Activated CD4-positive, alpha-beta T cell treated with anti-CD3 and anti-CD28 coated beads for 36 hours (primary cell): ENCODE measurements at regions of chr11 and their contacts with region 1.

Region 1: GRCh38 chr11:46352063-46352841 is 5.0 kb downstream of the DGKZ start:
- DNase-seq: peak; percentile 88
- ATAC-seq: peak; percentile 39
- H3K4me3 Mint-ChIP-seq: peak overlapping the region; percentile 76
- H3K27ac Mint-ChIP-seq: peak overlapping the region; percentile 94
- H3K4me1 Mint-ChIP-seq: peaks cover 82% of the 10 kb centered on the region
- H3K27me3 Mint-ChIP-seq: no peaks in the 10 kb centered on the region

Region 2: GRCh38 chr11:45354976-45355705 is 997.1 kb before region 1 on chr11:
- CTCF ChIA-PET with region 1: no interaction called
- POLR2A ChIA-PET with region 1: no interaction called
- intact Hi-C with region 1: no loop called
- DNase-seq: peak; percentile 93
- ATAC-seq: peak; percentile 97
- H3K4me3 Mint-ChIP-seq: peak overlapping the region; percentile 75
- H3K27ac Mint-ChIP-seq: peak overlapping the region; percentile 72
- H3K4me1 Mint-ChIP-seq: peaks cover 21% of the 10 kb centered on the region
- H3K27me3 Mint-ChIP-seq: peaks cover 2% of the 10 kb centered on the region

Region 3: DNA sequence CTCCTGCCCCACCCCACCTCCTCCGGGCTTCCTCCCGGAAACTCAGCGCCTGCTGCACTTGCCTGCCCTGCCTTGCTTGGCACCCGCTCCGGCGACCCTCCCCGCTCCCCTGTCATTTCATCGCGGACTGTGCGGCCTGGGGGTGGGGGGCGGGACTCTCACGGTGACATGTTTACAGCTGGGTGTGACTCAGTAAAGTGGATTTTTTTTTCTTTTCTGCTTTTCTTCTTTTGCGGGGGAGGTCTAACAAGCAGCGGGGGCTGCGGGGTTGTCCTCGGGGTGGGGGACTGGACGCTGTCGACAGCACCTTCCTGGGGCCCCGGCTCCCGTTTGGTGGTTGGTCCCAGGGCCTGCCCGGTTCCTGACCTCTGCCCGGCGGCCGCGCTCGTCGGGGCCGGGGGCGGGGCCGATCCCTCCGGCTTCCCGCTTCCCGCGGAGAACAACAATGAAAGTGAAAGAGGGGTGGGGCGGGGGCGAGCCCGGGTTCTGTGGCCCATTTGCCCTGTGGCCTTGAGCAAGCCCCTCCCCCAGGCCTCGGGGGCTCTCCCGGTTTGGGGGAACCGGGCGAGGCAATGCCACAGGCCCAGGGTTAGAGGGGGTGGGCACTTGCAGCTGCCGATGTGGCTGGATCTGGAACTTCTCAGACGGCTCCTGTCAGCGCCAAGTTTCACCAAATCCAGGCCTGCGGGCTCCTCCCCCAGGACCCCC is 28.2 kb after region 1 on chr11:
- CTCF ChIA-PET with region 1: interaction called, 11 read pairs
- POLR2A ChIA-PET with region 1: no interaction called
- intact Hi-C with region 1: loop called (anchors 1 to 5 kb)
- DNase-seq: peak; percentile 90
- ATAC-seq: peak; percentile 65
- H3K4me3 Mint-ChIP-seq: peak overlapping the region; percentile 72
- H3K27ac Mint-ChIP-seq: peak overlapping the region; percentile 58
- H3K4me1 Mint-ChIP-seq: peaks cover 8% of the 10 kb centered on the region
- H3K27me3 Mint-ChIP-seq: peaks cover 8% of the 10 kb centered on the region

Region 4: DNA sequence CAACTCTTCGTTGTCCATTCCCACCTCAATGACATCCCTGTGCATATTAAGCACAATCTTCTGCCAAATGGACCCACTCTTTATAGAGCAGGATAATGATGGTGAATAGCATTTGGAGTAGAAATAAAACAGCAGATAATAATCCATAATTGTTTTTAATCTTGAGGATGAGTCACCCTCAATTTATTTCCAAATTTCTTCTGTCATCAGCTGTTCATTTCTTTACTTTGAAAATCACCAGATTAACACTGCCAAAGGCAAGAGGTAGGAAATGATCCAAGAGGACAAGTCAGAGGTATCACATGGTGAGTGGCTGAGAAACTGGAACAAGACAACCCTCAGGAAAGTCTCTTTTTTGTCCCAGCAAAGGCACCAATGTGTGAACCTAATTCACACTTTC is 248.9 kb after region 1 on chr11:
- CTCF ChIA-PET with region 1: no interaction called
- POLR2A ChIA-PET with region 1: no interaction called
- intact Hi-C with region 1: no loop called
- DNase-seq: no peak
- ATAC-seq: no peak
- H3K4me3 Mint-ChIP-seq: no peak overlapping the region
- H3K27ac Mint-ChIP-seq: no peak overlapping the region
- H3K4me1 Mint-ChIP-seq: peaks cover 4% of the 10 kb centered on the region
- H3K27me3 Mint-ChIP-seq: no peaks in the 10 kb centered on the region